Natural killer cell (primary cell): ENCODE measurements at regions of chr1 and their contacts with region 1.

Region 1: DNA sequence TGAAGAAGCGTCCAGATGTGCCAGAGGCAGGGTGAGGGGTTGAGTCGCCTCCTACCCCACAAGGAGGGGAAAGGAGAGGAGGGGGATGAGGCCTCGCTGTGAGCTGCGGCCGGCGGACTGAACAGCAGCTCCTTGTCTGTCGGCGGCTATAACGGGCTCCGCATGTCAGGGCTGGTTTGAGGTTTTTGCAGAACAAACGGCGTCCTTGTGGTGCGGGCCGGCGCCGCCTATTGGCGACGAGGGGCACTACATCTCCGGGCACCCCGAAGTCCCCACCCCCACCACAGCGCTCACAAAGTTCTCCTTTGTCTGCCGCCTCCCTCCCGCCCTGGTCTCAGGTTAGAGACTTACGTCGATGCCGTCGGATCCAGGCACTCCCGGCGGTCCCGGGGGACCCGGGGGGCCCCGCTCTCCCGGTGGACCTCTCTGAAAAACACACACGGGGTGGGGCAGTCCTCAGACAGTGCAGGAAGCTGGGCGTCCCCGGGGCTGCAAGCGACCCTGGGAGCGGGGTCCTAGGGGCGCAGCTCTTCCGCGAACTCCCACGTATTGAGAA is 1.8 kb downstream of the COL9A2 start:
- DNase-seq: peak; percentile 80 to 93
- ATAC-seq: peak; percentile 83 to 93 (median 83)
- H3K4me3 ChIP-seq: peak overlapping the region; percentile 46
- H3K4me3 Mint-ChIP-seq: peak overlapping the region; percentile 92
- H3K27ac ChIP-seq: no peak overlapping the region
- H3K27ac Mint-ChIP-seq: peak overlapping the region in 1 of 2 donors; percentile 75
- H3K4me1 ChIP-seq: peaks cover 51% of the 10 kb centered on the region
- H3K4me1 Mint-ChIP-seq: peaks cover 27 to 33% of the 10 kb centered on the region in 2 donors
- H3K27me3 ChIP-seq: peaks cover 18% of the 10 kb centered on the region
- H3K27me3 Mint-ChIP-seq: peaks cover 20% of the 10 kb centered on the region in 2 donors
- CTCF ChIP-seq: peak; percentile 90

Region 2: GRCh38 chr1:40153073-40153770 is 162.1 kb before region 1 on chr1:
- intact Hi-C with region 1: loop called (anchors 5 kb)
- DNase-seq: peak in 1 of 2 donors; percentile 85
- ATAC-seq: peak; percentile 66 to 89 (median 75)
- H3K4me3 ChIP-seq: no peak overlapping the region
- H3K4me3 Mint-ChIP-seq: no peak overlapping the region
- H3K27ac ChIP-seq: peak overlapping the region; percentile 31
- H3K27ac Mint-ChIP-seq: no peak overlapping the region
- H3K4me1 ChIP-seq: no peaks in the 10 kb centered on the region
- H3K4me1 Mint-ChIP-seq: peaks cover 0 to 5% of the 10 kb centered on the region in 2 donors
- H3K27me3 ChIP-seq: no peaks in the 10 kb centered on the region
- H3K27me3 Mint-ChIP-seq: peaks cover 3 to 12% of the 10 kb centered on the region in 2 donors
- CTCF ChIP-seq: peak; percentile 79

Region 3: DNA sequence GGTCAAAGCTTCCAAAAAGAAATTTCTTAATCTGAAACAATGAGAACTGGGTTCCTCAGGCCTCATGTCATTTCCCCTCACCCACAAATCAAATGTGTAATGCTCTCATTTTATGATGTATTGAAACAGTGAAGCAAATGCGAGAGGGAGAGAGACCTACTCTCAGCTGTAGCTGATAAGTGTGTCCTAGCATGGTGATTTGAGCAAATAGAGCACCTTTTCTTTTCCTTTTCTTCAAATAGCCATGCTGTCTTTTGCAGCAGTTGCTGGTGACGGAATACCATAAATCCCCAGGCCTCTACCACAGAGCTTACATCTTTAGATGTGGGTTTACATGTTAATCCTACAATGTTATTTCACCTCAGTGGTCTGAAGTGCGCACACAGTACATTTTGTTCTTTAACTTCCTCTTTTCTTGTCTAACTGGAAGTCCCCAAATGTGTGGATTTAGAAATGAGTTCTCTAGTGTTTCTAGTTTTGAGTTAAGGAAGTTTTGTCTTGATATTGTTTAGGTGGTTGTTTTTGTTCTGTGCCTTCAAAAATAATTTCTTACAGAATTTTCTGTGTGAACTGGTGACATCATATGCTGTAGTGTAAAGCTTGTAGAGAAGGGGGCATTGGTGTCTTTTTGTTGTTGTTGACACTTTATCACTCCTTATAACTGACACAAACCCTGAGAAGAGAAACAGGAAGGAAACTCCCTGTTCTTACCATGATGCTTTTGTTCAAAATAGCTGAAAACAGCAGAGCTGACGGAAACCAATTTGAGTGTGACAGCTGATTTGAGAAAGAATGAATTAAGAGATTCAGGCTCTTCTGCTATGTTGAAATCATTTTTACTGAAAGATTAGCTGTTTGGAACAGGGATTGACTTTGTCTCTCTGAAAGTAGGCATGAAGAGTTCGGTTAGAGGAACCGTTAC is 70.4 kb after region 1 on chr1:
- intact Hi-C with region 1: loop called (anchors 5 kb)
- DNase-seq: peak; percentile 37 to 94
- ATAC-seq: peak; percentile 75 to 91 (median 87)
- H3K4me3 ChIP-seq: peak overlapping the region; percentile 19
- H3K4me3 Mint-ChIP-seq: peak overlapping the region; percentile 87
- H3K27ac ChIP-seq: peak overlapping the region; percentile 100
- H3K27ac Mint-ChIP-seq: peak overlapping the region; percentile 98 to 99
- H3K4me1 ChIP-seq: peaks cover 80% of the 10 kb centered on the region
- H3K4me1 Mint-ChIP-seq: peaks cover 87% of the 10 kb centered on the region in 2 donors
- H3K27me3 ChIP-seq: no peaks in the 10 kb centered on the region
- H3K27me3 Mint-ChIP-seq: no peaks in the 10 kb centered on the region
- CTCF ChIP-seq: no peak